ENCODE measurements at regions of chr3 and their contacts with region 1.

Region 1: DNA sequence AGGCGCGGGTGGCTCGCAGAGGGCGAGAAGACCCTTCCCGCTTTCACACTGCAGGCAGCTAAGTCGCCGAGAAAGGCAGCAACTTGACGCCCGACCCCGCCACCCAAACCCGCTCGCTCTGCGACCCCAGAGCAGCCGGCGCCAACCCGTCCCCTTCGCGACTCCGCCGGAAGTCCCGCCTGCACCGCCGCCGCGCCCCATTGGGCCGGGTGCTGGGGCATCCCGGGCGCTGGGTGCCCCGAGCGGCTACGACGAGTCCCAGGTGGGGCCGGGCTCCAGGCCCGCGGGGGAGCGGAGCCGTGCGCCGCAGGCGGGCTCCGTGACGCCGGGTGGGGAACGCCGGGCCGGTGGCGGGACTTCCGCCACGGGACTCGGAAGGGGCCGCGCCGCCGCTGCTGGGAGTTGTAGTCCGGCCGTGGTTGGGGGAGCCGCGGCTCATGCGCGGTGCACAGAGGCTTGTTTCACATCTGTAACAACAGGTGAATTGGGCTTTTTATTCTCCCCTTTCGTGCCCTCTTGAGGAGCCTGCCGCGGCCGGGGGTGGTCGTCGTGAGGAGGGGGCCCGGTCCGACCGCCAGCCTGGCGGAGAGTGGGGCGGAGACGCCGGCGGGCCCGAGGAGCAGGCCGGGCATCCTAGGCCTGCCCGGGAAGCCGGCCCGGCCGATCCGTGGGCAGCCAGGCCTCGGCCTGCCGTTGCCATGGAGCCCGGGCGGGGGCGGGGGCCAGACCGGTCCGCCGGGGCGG is at the start of gene DHX30:
- DNase-seq: peak; percentile 54 to 92
- H3K4me3 ChIP-seq: peak within 1 kb of the TSS; percentile 90
- H3K27ac ChIP-seq: peak within 1 kb of the TSS; percentile 89
- H3K4me1 ChIP-seq: peaks cover 22% of the 10 kb centered on the region
- H3K27me3 ChIP-seq: no peaks in the 10 kb centered on the region
- CTCF ChIP-seq: no peak
- total RNA-seq, gene DHX30: 60.2 and 63.2 TPM in 2 replicates

Region 2: GRCh38 chr3:47210863-47211405 is 592.0 kb before region 1 on chr3:
- CTCF ChIA-PET with region 1: no interaction called
- POLR2A ChIA-PET with region 1: no interaction called
- intact Hi-C with region 1: no loop called
- DNase-seq: no peak
- H3K4me3 ChIP-seq: no peak overlapping the region
- H3K27ac ChIP-seq: no peak overlapping the region
- H3K4me1 ChIP-seq: no peaks in the 10 kb centered on the region
- H3K27me3 ChIP-seq: no peaks in the 10 kb centered on the region
- CTCF ChIP-seq: no peak

Region 3: GRCh38 chr3:47513125-47513929 is 289.6 kb before region 1 on chr3 and contains the start of gene ELP6:
- CTCF ChIA-PET with region 1: interaction called, 3 read pairs
- POLR2A ChIA-PET with region 1: no interaction called
- intact Hi-C with region 1: loop called (anchors 1 kb)
- DNase-seq: peak; percentile 83 to 96
- H3K4me3 ChIP-seq: peak within 1 kb of the TSS; percentile 68
- H3K27ac ChIP-seq: peak within 1 kb of the TSS; percentile 55
- H3K4me1 ChIP-seq: peaks cover 5% of the 10 kb centered on the region; the same call in 1 of the 2 replicates
- H3K27me3 ChIP-seq: no peaks in the 10 kb centered on the region
- CTCF ChIP-seq: peak; percentile 55
- total RNA-seq, gene ELP6: 38.8 and 39.6 TPM in 2 replicates

Region 4: DNA sequence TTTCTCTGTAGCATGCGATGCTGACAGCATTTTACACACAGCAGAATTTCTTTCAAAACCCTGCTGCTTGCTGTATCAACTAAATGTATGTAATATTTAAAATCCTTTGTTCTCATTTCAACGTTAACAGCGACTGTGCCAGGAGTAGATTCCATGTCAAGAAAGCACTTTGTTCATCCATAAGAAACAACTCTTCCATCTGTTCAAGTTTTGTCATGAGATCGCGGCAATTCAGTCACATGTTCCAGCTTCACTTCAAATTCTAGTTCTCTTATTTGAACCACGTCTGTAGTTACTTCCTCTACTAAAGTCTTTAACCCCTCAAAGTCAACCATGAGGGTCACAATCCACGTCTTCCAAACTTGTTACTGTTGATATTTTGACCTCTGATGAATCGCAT is 71.8 kb before region 1 on chr3:
- CTCF ChIA-PET with region 1: no interaction called
- POLR2A ChIA-PET with region 1: no interaction called
- intact Hi-C with region 1: no loop called
- DNase-seq: no peak
- H3K4me3 ChIP-seq: no peak overlapping the region
- H3K27ac ChIP-seq: no peak overlapping the region
- H3K4me1 ChIP-seq: 0 out of 2 replicates have a peak, but pooled peaks cover 5% of the 10 kb centered on the region
- H3K27me3 ChIP-seq: no peaks in the 10 kb centered on the region
- CTCF ChIP-seq: no peak

Region 5: DNA sequence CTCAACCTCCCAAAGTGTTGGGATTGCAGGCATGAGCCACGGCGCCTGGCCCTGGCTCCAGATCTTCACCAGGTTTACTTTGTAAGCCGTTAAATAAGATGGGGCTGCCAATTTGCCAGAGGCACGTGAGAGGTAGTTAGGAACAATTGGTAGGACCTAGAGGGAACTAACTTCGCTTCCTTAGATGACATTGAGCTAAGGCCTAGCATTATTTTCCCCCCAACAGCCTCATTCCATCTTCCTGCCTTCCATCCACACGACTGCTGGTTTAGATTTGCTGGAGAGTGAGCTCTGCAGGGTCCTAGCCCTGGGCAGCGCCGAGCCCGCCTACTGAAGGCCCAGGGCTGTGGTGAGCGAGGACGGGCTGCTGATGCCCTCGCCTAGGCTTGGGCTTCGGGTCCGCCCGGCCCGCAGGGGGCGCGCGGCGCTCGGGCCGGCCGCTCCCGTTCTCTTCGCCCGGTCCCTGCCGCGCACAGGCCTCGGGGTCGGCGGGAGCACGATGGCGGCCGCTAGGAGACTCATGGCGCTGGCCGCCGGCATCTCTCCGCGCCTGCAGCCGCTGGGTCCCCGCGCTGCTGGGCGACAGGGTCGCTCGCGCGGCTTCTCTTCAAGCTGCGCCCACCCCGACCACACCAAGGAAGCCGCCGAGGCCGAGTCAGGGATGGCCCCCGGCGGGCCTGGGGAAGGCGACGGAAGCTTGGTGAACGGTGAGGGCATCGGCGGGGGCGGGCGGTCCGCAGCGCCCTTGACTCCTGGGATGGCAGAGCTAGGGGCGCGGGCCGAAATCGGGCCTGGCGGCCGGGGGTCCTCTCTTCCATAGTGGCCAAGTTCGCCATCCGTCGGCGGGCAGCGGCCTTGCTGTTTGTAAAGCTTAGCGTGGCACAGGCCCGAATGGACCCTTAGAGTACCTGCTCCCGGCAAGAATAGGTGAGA is 21.9 kb after region 1 on chr3:
- CTCF ChIA-PET with region 1: no interaction called
- POLR2A ChIA-PET with region 1: interaction called, 3 read pairs
- intact Hi-C with region 1: loop called (anchors 1 kb)
- DNase-seq: peak; percentile 57 to 82
- H3K4me3 ChIP-seq: peak overlapping the region; percentile 93
- H3K27ac ChIP-seq: peak overlapping the region; percentile 41; the same call in 1 of the 2 replicates
- H3K4me1 ChIP-seq: peaks cover 9% of the 10 kb centered on the region
- H3K27me3 ChIP-seq: no peaks in the 10 kb centered on the region
- CTCF ChIP-seq: peak; percentile 70

Region 6: DNA sequence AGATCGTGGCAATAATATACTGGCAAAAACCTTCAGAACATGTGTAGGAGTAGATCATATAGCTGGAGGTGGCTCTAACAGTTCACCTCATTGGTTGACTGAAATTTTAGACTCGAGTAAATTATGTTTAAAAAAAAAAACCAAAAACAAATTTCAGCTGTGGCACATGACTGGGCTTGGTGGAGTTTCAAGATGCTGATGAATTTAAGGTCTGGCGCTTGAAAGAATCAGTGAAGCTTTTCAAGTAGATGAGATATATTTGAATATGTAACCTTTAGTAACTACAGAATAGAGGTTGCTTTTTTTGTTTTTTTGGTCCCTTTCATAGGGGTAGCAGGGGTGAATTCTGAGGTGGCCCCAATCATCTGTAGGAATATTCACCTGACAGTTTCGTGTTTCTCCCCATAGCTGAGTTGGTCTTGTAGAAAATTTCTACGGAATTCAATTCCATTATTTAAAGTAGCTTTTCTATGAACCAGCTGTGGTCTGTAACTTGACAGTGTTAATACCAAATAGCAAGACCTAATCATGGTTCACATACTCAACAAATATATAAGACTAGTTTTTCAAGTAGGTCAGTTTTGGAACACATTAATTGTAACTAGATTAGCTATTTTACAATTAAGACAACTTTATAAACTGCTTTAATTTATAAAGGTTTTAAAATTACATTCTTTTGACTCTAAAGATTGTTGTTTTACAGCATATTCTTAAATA is 147.7 kb after region 1 on chr3:
- CTCF ChIA-PET with region 1: no interaction called
- POLR2A ChIA-PET with region 1: interaction called, 41 read pairs
- intact Hi-C with region 1: no loop called
- DNase-seq: no peak
- H3K4me3 ChIP-seq: no peak overlapping the region
- H3K27ac ChIP-seq: no peak overlapping the region
- H3K4me1 ChIP-seq: peaks cover 15% of the 10 kb centered on the region
- H3K27me3 ChIP-seq: no peaks in the 10 kb centered on the region
- CTCF ChIP-seq: no peak